ENCODE measurements at regions of chr6 and their contacts with region 1.

Region 1: GRCh38 chr6:31680840-31681671 is at the start of gene LY6G5C:
- DNase-seq: peak; percentile 79
- ATAC-seq: peak; percentile 78
- H3K4me3 ChIP-seq: peak within 1 kb of the TSS; percentile 44 to 69 (median 53)
- H3K4me3 Mint-ChIP-seq: peak within 1 kb of the TSS; percentile 88
- H3K27ac ChIP-seq: peak within 1 kb of the TSS in 1 of 2 donors; percentile 50
- H3K27ac Mint-ChIP-seq: peak within 1 kb of the TSS; percentile 57
- H3K4me1 ChIP-seq: peaks cover 19 to 40% of the 10 kb centered on the region in 2 donors
- H3K4me1 Mint-ChIP-seq: peaks cover 43% of the 10 kb centered on the region
- H3K27me3 ChIP-seq: no peaks in the 10 kb centered on the region
- H3K27me3 Mint-ChIP-seq: no peaks in the 10 kb centered on the region
- CTCF ChIP-seq: peak; percentile 55
- total RNA-seq, gene LY6G5C: 0.76 and 2.1 TPM in 2 replicates

Region 2: GRCh38 chr6:31702819-31703522 is 21.9 kb after region 1 on chr6 and contains the start of gene ABHD16A:
- CTCF ChIA-PET with region 1: interaction called, 5 read pairs
- POLR2A ChIA-PET with region 1: interaction called, 3 read pairs
- intact Hi-C with region 1: loop called (anchors 1 kb)
- DNase-seq: peak; percentile 99
- ATAC-seq: peak; percentile 95
- H3K4me3 ChIP-seq: peak within 1 kb of the TSS; percentile 65 to 98 (median 96)
- H3K4me3 Mint-ChIP-seq: peak within 1 kb of the TSS; percentile 98
- H3K27ac ChIP-seq: peak within 1 kb of the TSS; percentile 87 to 93
- H3K27ac Mint-ChIP-seq: peak within 1 kb of the TSS; percentile 91
- H3K4me1 ChIP-seq: peaks cover 20 to 28% of the 10 kb centered on the region in 2 donors
- H3K4me1 Mint-ChIP-seq: peaks cover 32% of the 10 kb centered on the region
- H3K27me3 ChIP-seq: no peaks in the 10 kb centered on the region
- H3K27me3 Mint-ChIP-seq: no peaks in the 10 kb centered on the region
- CTCF ChIP-seq: no peak
- total RNA-seq, gene ABHD16A: 78.3 and 90.3 TPM in 2 replicates

Region 3: DNA sequence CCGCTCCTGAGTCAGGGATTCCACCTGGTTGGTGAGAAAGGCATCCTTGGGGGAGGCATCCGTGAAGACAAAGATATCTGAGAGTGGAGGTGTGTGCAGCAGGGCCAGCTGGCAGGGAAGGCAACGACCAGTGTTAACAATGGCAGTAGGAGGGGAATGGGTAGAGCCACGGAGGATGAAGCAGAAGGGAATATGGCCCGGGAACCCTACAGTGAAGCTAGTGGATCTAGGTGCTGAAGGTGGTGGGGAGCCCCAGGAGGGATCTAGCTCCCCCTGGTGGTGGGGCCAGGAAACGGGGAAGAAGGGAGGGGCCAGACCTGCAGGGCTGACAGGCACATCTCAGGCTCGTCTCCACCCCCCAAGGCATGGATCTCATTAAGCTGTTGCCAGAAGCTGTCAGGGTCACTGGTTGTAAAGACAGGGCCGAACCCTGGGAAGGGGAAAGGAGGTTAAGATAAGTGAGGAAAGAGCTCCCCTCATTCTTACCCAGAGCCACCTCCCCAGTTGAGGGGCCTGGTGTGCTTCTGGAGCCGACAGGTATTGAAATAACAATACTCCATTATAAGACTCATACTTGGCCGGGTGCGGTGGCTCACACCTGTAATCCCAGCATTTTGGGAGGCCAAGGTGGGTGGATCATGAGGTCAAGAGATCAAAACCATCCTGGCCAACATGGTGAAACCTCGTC is 88.8 kb after region 1 on chr6:
- CTCF ChIA-PET with region 1: interaction called, 11 read pairs
- POLR2A ChIA-PET with region 1: no interaction called
- intact Hi-C with region 1: loop called (anchors 1 kb)
- DNase-seq: peak; percentile 87
- ATAC-seq: peak; percentile 98
- H3K4me3 ChIP-seq: no peak overlapping the region
- H3K4me3 Mint-ChIP-seq: no peak overlapping the region
- H3K27ac ChIP-seq: no peak overlapping the region
- H3K27ac Mint-ChIP-seq: peak overlapping the region; percentile 32
- H3K4me1 ChIP-seq: peaks cover 0 to 9% of the 10 kb centered on the region in 2 donors
- H3K4me1 Mint-ChIP-seq: peaks cover 13% of the 10 kb centered on the region
- H3K27me3 ChIP-seq: no peaks in the 10 kb centered on the region
- H3K27me3 Mint-ChIP-seq: no peaks in the 10 kb centered on the region
- CTCF ChIP-seq: peak; percentile 74

Region 4: GRCh38 chr6:31952140-31952805 is 271.2 kb after region 1 on chr6:
- CTCF ChIA-PET with region 1: interaction called, 5 read pairs
- POLR2A ChIA-PET with region 1: no interaction called
- intact Hi-C with region 1: loop called (anchors 2 kb)
- DNase-seq: peak; percentile 51
- ATAC-seq: peak; percentile 31
- H3K4me3 ChIP-seq: no peak overlapping the region
- H3K4me3 Mint-ChIP-seq: no peak overlapping the region
- H3K27ac ChIP-seq: no peak overlapping the region
- H3K27ac Mint-ChIP-seq: no peak overlapping the region
- H3K4me1 ChIP-seq: no peaks in the 10 kb centered on the region
- H3K4me1 Mint-ChIP-seq: no peaks in the 10 kb centered on the region
- H3K27me3 ChIP-seq: no peaks in the 10 kb centered on the region
- H3K27me3 Mint-ChIP-seq: no peaks in the 10 kb centered on the region
- CTCF ChIP-seq: peak; percentile 42

Region 5: GRCh38 chr6:32127717-32128592 is 446.9 kb after region 1 on chr6 and contains the start of gene ATF6B:
- CTCF ChIA-PET with region 1: interaction called, 10 read pairs
- POLR2A ChIA-PET with region 1: no interaction called
- intact Hi-C with region 1: no loop called
- DNase-seq: peak; percentile 98
- ATAC-seq: peak; percentile 92
- H3K4me3 ChIP-seq: peak within 1 kb of the TSS; percentile 82 to 100 (median 99)
- H3K4me3 Mint-ChIP-seq: peak within 1 kb of the TSS; percentile 98
- H3K27ac ChIP-seq: peak within 1 kb of the TSS; percentile 62 to 91
- H3K27ac Mint-ChIP-seq: peak within 1 kb of the TSS; percentile 95
- H3K4me1 ChIP-seq: peaks cover 26 to 36% of the 10 kb centered on the region in 2 donors
- H3K4me1 Mint-ChIP-seq: peaks cover 48% of the 10 kb centered on the region
- H3K27me3 ChIP-seq: no peaks in the 10 kb centered on the region
- H3K27me3 Mint-ChIP-seq: no peaks in the 10 kb centered on the region
- CTCF ChIP-seq: no peak
- total RNA-seq, gene ATF6B: 201 and 206 TPM in 2 replicates

Measured in B cell (primary cell).